Right ventricle myocardium inferior (tissue), 1 donor: ENCODE measurements at regions of chr15 and their contacts with region 1.

Region 1: DNA sequence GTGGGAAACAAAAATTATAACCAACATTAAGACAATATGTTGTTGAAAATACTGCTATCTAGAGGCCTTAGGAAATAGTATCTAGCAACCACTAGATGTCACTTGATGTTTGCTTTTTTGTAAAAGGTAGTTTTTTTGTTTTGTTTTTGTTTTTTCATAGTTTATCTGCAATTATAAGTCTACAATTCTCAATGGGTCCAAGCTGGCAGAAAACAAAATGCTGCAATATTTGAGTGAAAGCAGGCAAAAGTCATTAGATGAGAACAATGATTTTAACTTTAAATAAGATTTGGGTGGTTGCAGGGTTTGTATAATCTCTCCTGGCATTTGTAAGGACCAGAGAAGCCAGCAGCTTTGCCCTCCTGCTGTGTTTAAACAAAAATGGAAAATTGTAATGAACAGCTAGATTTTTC is 27.0 kb downstream of the DUT start:
- DNase-seq: no peak
- ATAC-seq: peak; percentile 62

Region 2: GRCh38 chr15:48414015-48414414 is 55.8 kb after region 1 on chr15:
- intact Hi-C with region 1: loop called (anchors 10 kb)
- DNase-seq: no peak
- ATAC-seq: peak; percentile 49

Region 3: DNA sequence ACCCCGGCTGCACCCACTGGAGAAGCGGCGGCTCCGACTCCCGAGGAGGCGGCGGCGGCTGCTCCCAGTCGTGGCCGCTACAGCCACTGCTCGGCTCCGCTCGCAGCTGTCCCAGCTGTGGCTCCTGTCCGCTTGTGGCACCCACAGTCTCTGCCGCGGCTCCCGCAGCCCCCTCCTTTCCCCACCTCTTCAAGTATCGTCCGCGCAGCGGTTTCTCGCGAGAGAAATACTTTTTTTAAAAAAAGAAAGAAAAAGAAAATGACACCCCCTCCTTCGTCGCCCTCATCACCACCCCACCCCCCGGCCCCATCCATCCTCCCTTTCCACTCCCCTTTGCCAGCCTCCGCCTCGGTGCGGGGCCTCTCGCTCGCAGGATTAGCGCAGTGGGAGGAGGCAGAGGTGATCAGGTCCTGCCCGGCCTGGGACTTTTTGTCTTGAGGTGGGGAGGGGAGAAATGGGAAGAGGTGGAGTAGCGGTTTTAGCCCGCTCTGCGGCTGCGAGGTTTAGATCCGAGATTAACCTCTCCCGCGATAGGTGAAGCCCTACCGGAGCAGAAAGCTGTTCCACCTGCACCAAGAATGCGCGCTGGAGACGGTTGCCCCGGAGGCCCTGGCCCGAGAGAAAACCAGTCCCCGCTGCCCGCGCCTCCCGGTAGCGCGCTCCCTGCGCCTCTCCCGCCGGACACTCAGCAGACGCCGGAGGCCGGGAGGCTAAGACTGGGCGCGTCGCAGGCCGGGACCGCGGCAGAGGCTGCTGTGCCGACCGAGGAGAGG is 287.5 kb after region 1 on chr15 and contains the start of gene FBN1:
- intact Hi-C with region 1: loop called (anchors 2 kb)
- DNase-seq: peak; percentile 83
- ATAC-seq: peak; percentile 90
- total RNA-seq, gene FBN1: 41.0 TPM

Region 4: GRCh38 chr15:48800811-48801455 is 442.7 kb after region 1 on chr15:
- intact Hi-C with region 1: loop called (anchors 2 kb)
- DNase-seq: no peak
- ATAC-seq: no peak

Region 5: DNA sequence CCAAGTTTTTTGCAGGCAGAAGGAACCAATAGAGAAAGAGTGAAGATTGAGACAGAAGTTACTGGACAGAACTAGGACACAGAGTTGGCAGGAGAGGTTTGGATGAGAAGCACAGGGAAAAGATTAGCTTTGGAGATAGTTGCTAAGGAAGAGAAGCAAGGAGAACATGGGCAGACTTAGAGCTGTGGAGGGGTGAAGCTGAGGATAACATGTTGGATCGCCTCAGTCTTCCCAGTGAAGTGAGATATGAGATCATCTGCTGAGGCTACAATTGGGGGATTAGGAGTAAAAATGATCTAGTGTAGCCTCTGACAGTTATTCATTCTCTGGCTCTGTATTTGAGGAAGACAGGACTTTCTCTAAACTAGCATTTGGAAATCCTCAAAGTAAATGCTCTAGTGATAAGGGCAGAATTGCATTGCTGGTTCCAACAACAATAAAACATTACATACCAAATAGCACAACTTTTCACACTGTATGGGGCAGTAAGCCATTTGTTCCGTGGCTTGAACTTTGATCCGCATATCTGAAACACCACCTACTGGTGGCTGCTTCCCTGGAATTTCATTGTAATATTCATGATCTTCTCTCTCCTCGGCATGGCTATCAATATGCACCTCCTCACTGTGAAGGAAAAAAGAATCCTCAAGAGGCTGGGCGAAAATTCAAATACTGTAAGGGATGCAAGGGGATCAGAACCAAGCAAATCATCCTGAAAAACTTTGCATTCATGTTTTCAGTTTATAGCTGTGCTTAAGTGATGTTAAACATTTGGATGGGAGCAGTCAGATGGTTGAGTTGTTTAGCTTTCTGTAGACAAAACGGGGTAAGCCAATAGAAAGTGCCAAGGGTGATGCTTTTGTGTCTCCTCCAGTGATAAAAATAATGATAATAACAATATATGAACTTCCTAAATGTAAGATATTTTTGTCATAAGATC is 497.5 kb after region 1 on chr15:
- intact Hi-C with region 1: loop called (anchors 5 kb)
- DNase-seq: no peak
- ATAC-seq: peak; percentile 91